ENCODE measurements at regions of chr4 and their contacts with region 1.

Region 1: DNA sequence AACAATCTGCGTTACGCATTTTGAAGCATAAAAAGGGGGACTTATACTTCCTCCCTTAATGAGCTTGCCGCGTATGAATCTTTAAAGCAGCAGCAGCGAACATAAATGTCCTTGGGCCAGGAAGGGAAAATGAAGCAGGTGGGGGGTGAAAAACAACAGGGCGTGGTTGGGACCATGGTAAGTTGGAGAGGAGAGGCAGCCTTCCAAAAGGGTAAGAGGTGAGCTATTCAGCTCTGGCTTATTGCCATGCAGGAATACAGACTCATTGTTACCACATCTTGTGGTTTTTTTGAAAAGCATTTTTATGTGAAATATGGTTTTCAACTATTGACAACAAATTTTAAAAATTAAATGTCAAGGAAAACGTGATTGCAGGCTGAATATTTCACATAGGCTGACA is 710.7 kb upstream of the FAM241A start:
- DNase-seq: no peak
- ATAC-seq: no peak
- H3K4me3 ChIP-seq: no peak overlapping the region
- H3K27ac ChIP-seq: no peak overlapping the region
- H3K4me1 ChIP-seq: no peaks in the 10 kb centered on the region
- H3K27me3 ChIP-seq: no peaks in the 10 kb centered on the region
- CTCF ChIP-seq: no peak
- POLR2A ChIP-seq: no peak

Region 2: GRCh38 chr4:111492496-111492895 is 57.9 kb after region 1 on chr4:
- intact Hi-C with region 1: loop called in 1 of 10 experiments (anchors 2 kb)
- DNase-seq: no peak
- ATAC-seq: no peak
- H3K4me3 ChIP-seq: no peak overlapping the region
- H3K27ac ChIP-seq: no peak overlapping the region
- H3K4me1 ChIP-seq: no peaks in the 10 kb centered on the region
- H3K27me3 ChIP-seq: no peaks in the 10 kb centered on the region
- CTCF ChIP-seq: no peak
- POLR2A ChIP-seq: no peak